ENCODE measurements at regions of chr7 and their contacts with region 1.

Region 1: DNA sequence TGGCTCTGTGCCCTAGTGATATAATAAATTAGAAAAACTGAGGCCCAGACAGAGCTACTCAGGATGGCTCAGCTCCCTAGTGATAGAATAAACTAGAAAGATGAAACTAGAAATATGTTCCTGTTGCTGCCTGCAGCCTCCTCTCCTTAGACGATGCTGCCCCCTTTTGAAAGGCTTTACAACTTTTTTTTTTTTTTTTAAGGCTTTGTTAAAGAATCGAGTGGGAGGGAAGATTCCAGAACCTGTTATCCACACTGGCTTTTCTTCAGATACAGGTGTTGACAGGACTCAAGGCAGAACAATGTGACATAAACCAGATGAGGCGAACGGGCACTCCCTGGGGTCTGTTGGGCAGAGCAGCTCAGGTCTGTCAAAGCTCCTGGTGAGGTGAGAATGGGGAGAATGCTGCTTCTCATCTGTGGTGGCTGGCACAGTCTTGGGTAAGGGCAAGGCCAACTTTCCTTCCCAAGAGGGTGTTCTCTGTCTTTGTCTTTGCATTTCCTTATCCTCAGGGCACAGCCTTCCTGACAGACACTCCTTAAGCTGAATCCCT is 175.1 kb downstream of the COBL start:
- DNase-seq: peak; percentile 35
- ATAC-seq: peak; percentile 88
- H3K4me3 ChIP-seq: no peak overlapping the region
- H3K27ac ChIP-seq: no peak overlapping the region
- H3K4me1 ChIP-seq: no peaks in the 10 kb centered on the region
- H3K27me3 ChIP-seq: no peaks in the 10 kb centered on the region
- CTCF ChIP-seq: peak; percentile 80
- POLR2A ChIP-seq: 0 out of 2 replicates have a peak, but pooled peaks have one; percentile 29
- RAD21 ChIP-seq: peak; percentile 87

Region 2: DNA sequence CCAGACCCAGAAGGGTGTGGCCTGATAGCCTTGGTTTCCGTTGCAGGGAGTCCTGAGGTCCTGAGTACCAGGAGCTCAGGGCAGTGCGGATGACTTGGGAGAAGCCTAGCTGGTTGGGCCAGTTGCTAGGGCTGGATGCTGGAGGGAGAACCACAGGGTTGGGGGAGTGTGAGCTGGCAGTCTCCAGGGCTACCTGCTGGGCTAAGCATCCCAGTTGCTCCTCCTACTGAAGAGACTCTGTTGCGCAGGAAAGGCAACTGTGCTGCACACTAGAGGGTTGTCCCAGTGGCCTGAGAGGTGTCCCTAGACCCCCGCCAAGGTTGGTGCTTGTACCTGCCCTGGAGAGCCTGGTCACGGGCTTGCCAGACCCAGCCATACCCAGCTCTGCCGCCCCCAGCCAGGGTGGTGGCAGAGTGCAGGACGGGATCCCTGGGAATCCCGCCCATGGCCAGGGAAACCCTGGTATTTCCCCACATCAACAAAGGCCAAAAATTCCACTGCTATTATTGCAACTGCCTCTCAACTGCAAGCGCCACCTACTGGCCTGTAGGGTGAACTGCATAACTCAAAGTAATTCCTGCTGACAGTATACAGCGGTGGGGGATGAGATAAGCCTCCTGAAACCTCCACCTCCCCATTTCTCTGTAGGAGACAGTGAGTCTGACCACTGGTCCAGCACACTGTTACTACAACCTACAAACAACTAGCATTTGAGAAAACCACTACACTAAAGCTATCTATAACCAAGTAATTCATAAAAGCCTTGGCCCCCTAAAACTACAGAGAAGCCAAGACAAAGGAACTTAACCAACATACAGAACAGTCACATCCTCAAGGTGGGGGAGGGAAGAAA is 508.7 kb before region 1 on chr7:
- CTCF ChIA-PET with region 1: interaction called, 4 read pairs
- POLR2A ChIA-PET with region 1: no interaction called
- dilution Hi-C with region 1: no loop called
- in situ Hi-C with region 1: no loop called
- intact Hi-C with region 1: loop called (anchors 5 kb)
- DNase-seq: peak; percentile 50
- ATAC-seq: peak; percentile 95
- H3K4me3 ChIP-seq: no peak overlapping the region
- H3K27ac ChIP-seq: no peak overlapping the region
- H3K4me1 ChIP-seq: no peaks in the 10 kb centered on the region
- H3K27me3 ChIP-seq: no peaks in the 10 kb centered on the region
- CTCF ChIP-seq: peak; percentile 82
- POLR2A ChIP-seq: no peak
- RAD21 ChIP-seq: peak; percentile 54

Region 3: DNA sequence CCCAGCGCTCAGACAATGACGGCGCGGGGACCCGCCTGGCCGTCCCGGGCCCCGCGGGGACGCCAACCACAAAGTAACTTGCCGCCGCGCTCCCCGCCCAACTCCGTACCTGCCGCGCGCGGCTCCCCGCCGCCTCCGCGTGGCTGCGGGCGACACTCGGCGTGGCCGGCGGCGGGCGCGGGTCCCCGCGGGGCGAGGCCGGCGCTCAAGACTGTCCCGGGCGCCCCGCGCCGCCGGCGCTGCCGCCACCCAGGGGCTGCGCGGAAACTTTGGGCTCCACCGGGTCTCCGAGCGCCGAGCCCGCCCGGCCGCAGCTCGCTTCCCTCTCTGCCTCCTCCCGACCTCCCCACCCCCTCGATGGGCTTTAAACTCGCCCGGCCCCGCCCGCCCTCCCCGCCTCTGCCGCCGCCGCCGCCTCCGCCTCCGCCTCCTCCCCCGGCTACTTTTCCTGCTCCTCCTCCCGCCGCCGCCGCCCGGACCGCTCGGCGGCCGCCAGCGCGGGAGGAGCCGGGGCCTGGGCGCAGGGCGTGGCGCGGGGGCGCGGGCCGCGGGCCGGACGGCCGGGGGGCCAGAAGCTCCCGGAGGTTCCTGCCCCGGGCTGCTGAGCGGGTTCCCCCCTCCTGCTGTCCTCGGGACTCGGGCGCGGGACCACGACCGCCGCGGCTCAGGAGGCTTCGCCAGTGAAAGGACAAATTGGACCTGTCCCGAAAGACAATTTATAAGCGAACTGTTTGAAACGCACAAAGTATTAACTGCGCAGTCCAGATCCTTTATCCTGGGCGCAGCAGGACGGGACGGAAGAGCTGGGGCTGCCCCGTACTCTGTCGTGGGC is 348.2 kb before region 1 on chr7:
- CTCF ChIA-PET with region 1: interaction called, 4 read pairs
- POLR2A ChIA-PET with region 1: no interaction called
- dilution Hi-C with region 1: no loop called
- in situ Hi-C with region 1: no loop called
- intact Hi-C with region 1: loop called (anchors 5 kb)
- DNase-seq: peak; percentile 36
- ATAC-seq: peak; percentile 78
- H3K4me3 ChIP-seq: peak overlapping the region; percentile 57
- H3K27ac ChIP-seq: no peak overlapping the region
- H3K4me1 ChIP-seq: peaks cover 10% of the 10 kb centered on the region
- H3K27me3 ChIP-seq: peaks cover 17% of the 10 kb centered on the region
- CTCF ChIP-seq: no peak
- POLR2A ChIP-seq: no peak
- RAD21 ChIP-seq: no peak

Region 4: GRCh38 chr7:51062222-51062987 is 79.1 kb before region 1 on chr7:
- CTCF ChIA-PET with region 1: interaction called, 13 read pairs
- POLR2A ChIA-PET with region 1: no interaction called
- dilution Hi-C with region 1: no loop called
- in situ Hi-C with region 1: no loop called
- intact Hi-C with region 1: no loop called
- DNase-seq: no peak
- ATAC-seq: no peak
- H3K4me3 ChIP-seq: no peak overlapping the region
- H3K27ac ChIP-seq: no peak overlapping the region
- H3K4me1 ChIP-seq: no peaks in the 10 kb centered on the region
- H3K27me3 ChIP-seq: peaks cover 18% of the 10 kb centered on the region; the same call in 1 of the 2 replicates
- CTCF ChIP-seq: no peak
- POLR2A ChIP-seq: no peak
- RAD21 ChIP-seq: no peak

Region 5: DNA sequence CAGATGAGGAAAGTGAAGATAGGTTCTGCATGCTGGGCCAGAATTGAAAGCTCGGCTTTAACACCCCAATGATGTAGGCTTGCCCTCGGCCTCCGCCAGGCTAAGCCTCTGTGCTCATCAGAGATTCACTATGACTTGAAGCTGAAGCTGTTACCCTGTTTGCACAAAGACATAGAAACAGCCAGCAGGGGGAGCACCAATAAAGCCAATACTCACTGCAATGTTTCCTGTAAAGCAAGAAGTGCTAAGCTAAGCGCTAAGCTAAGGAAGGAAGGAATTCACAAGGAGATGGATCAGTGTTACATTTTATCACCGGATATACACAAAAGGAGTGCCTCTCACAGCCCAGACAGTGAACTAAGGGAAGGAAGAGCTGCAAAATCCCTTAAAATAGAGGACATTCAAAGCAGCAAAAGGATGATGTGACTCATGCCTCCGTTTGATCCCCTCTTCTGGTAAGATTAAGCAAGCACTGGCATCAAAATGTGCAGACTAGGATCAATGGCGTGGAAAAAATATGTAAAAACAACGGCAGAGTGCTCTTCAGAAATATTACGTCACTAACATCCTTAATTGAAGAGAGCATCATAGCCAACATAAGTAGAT is 21.3 kb after region 1 on chr7:
- CTCF ChIA-PET with region 1: interaction called, 10 read pairs
- POLR2A ChIA-PET with region 1: no interaction called
- dilution Hi-C with region 1: no loop called
- in situ Hi-C with region 1: no loop called
- intact Hi-C with region 1: no loop called
- DNase-seq: peak; percentile 75
- ATAC-seq: peak; percentile 93
- H3K4me3 ChIP-seq: no peak overlapping the region
- H3K27ac ChIP-seq: no peak overlapping the region
- H3K4me1 ChIP-seq: no peaks in the 10 kb centered on the region
- H3K27me3 ChIP-seq: peaks cover 10% of the 10 kb centered on the region; the same call in 1 of the 2 replicates
- CTCF ChIP-seq: peak; percentile 73
- POLR2A ChIP-seq: no peak
- RAD21 ChIP-seq: peak; percentile 54

Region 6: DNA sequence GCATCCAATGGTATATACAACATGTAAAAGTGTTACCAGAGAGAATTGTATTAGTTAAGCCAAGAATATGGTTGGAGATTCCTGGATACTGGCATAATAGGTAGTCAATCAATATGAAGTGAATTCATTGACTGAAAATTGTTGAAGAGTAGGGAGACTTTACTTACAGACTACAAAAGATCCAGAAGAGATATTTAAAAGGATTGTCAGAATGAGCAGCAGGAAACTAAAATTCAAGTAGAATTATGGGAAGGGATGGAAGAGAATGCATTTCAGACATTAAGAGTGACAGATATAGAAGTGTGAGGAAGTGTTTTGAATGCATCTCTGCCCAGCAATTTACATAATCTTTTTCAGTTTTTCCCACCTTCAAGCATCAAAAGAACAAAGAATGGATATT is 1831.6 kb after region 1 on chr7:
- CTCF ChIA-PET with region 1: no interaction called
- POLR2A ChIA-PET with region 1: no interaction called
- dilution Hi-C with region 1: no loop called
- in situ Hi-C with region 1: no loop called
- intact Hi-C with region 1: no loop called
- DNase-seq: no peak
- ATAC-seq: no peak
- H3K4me3 ChIP-seq: no peak overlapping the region
- H3K27ac ChIP-seq: no peak overlapping the region
- H3K4me1 ChIP-seq: no peaks in the 10 kb centered on the region
- H3K27me3 ChIP-seq: no peaks in the 10 kb centered on the region
- CTCF ChIP-seq: no peak
- POLR2A ChIP-seq: no peak
- RAD21 ChIP-seq: no peak

Measured in IMR-90 (cell line).